ENCODE measurements at regions of chr22 and their contacts with region 1.

Region 1: DNA sequence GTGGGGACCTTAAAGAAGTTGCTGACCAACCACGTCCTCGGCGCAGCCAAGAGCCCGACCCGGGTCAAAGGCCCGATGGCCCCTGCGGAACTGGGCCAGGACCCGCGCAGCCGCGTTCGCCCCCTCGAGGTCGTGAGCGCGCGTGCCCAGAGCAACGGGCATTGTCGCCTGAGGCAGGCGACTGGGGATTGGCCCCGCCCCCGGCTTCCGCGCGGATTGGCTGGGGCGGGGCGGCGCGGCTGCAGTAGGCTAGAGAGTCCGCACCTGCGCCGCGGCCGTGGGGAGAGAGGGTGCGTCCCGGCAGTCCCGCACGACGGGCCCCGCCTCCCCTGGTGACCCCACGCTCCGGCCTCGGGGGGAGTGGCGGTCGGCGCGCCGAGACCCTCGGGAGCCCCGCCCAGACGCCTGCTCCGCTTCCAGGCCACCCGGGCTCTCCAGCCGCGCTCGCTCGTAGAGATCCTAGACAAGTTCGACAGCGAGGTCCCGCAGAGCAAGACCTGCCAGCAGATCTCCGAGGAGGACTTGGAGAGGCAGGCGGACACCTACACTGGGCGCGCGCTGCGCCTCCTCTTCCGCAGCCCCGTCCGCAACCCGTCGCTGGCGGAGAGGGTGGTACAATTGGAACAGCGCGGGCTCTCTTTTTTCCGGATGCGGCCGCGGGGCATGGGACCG is 8.3 kb upstream of the PPIL2 start:
- DNase-seq: peak; percentile 65 to 76 (median 68)
- H3K4me3 ChIP-seq: peak overlapping the region; percentile 41 to 85 (median 73)
- H3K27ac ChIP-seq: peak overlapping the region in 1 of 2 experiments; percentile 68
- H3K4me1 ChIP-seq: peaks cover 0 to 29% (median 28%) of the 10 kb centered on the region in 4 experiments
- H3K27me3 ChIP-seq: no peaks in the 10 kb centered on the region

Region 2: DNA sequence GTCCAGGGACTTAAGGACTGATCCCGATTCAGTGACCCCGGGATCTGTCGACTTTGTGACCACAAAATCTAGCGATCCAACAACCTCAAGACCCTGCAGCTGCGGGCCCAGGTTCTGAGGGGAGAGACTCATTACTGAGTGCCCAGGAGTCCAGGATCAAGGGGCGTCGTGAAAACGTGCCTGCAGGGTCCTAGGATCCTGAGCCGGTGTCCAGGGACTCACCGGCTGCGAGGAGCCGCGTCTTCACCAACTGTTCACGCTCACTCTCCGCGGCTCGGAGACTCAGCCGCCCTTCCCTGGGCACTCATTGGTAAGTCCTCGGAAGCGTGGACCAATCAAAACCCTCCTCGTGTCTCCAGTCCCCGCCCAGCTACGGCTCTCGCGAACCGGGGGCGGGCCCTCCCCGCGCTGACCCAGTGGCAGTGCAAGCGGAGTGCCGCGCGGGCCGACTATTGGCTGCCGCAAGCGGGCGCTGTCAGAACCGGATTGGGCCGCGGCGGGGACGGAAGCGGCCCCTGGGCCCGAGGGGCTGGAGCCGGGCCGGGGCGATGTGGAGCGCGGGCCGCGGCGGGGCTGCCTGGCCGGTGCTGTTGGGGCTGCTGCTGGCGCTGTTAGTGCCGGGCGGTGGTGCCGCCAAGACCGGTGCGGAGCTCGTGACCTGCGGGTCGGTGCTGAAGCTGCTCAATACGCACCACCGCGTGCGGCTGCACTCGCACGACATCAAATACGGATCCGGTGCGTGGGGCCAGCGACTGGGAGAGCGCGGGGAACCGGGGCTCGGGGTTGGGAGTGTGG is 15.5 kb before region 1 on chr22 and contains the start of gene SDF2L1:
- CTCF ChIA-PET with region 1: interaction called, 14 read pairs
- POLR2A ChIA-PET with region 1: interaction called, 4 read pairs
- DNase-seq: peak; percentile 97 to 98 (median 98)
- H3K4me3 ChIP-seq: peak within 1 kb of the TSS; percentile 13 to 74 (median 66)
- H3K27ac ChIP-seq: peak within 1 kb of the TSS; percentile 54 to 95
- H3K4me1 ChIP-seq: peaks cover 3 to 30% (median 23%) of the 10 kb centered on the region in 4 experiments
- H3K27me3 ChIP-seq: peaks cover 0 to 5% (median 0%) of the 10 kb centered on the region in 5 experiments

Region 3: DNA sequence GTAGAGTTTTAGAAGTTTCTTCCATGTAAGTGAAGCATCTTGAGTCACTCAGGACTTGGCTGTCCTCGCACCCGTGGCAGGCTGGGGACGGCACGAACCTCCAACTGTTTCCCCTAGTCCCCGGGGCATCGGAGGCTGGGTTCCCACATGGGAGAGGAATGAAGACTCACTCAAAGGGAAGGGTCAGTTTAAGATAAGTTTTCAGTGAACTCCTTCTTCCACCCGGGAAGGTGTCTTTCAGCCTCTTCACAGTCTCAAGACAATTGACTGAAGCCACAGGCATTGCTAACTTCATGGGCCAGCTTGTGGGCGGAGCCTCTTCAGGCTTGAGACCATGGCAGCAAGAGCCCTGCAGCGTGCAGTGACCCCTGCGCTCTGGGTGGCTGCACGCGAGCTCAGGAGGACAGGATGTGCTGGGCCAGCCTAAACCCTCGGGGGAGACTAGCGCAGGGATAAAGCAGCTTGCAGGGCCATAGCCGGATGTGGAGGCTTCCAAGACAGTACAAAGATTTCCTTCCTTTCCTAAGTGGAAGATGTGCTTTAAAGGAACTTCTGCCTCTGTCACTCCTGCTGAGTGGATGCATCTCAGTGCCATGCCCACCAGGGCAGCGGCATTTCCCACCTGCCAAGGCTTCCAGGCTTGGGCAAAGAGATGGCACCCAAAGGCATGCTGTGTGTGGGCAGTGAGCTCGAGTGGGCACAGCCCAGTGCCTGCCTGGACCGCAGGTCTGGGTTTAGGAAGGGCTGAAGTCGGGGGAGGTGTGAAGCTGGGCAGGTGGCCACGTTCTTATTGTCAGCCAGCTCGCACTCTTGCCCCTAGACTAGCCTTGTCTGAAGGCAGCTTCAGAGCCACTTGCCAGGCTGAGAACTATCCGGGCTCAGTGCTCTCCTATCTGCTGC is 41.2 kb after region 1 on chr22:
- CTCF ChIA-PET with region 1: no interaction called
- POLR2A ChIA-PET with region 1: no interaction called
- DNase-seq: no peak
- H3K4me3 ChIP-seq: no peak overlapping the region
- H3K27ac ChIP-seq: no peak overlapping the region
- H3K4me1 ChIP-seq: no peaks in the 10 kb centered on the region
- H3K27me3 ChIP-seq: no peaks in the 10 kb centered on the region

Measured in common myeloid progenitor, CD34-positive (primary cell).